ENCODE measurements at regions of chr11 and their contacts with region 1.

Region 1: GRCh38 chr11:127003260-127003981 is 2.9 kb upstream of the KIRREL3 start:
- DNase-seq: no peak
- H3K4me3 ChIP-seq: peak overlapping the region; percentile 62
- CTCF ChIP-seq: peak; percentile 72

Region 2: DNA sequence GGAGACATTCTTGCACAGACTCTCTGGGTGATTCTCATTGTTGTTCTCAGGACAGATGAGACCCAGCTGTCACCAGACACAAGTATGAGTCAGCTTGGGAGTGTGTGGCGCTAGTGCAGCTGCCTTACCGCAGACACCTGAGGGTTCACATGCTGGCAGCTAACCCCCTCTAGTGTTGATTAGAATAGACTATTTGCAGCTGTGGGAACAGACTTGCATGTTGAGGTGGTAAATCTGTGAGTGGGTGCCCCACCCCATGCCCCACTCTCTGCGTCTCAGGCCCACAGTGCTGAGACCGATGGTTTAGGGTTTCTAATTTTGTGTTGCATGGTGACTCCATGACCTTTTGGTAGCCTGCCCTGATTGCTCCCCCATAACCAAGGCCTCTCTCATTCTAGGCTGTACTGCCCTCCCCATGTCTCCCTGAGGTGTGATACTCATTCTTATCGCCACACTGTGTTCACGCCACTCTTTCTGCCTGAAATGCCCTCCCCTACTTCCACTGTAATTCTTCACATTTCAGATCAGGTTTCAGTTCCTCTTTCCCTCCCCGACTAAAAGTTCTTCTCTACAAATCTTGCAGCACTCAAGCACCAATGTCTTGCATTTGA is 70.8 kb after region 1 on chr11:
- CTCF ChIA-PET with region 1: interaction called, 18 read pairs
- POLR2A ChIA-PET with region 1: no interaction called
- DNase-seq: peak; percentile 29
- H3K4me3 ChIP-seq: no peak overlapping the region
- CTCF ChIP-seq: peak; percentile 73